Activated CD4-positive, alpha-beta T cell treated with anti-CD3 and anti-CD28 coated beads, Interleukin-2, amount 10 ng/mL, durations not matched to agents 24 days and 14 days (primary cell): ENCODE measurements at regions of chr2 and their contacts with region 1.

Region 1: DNA sequence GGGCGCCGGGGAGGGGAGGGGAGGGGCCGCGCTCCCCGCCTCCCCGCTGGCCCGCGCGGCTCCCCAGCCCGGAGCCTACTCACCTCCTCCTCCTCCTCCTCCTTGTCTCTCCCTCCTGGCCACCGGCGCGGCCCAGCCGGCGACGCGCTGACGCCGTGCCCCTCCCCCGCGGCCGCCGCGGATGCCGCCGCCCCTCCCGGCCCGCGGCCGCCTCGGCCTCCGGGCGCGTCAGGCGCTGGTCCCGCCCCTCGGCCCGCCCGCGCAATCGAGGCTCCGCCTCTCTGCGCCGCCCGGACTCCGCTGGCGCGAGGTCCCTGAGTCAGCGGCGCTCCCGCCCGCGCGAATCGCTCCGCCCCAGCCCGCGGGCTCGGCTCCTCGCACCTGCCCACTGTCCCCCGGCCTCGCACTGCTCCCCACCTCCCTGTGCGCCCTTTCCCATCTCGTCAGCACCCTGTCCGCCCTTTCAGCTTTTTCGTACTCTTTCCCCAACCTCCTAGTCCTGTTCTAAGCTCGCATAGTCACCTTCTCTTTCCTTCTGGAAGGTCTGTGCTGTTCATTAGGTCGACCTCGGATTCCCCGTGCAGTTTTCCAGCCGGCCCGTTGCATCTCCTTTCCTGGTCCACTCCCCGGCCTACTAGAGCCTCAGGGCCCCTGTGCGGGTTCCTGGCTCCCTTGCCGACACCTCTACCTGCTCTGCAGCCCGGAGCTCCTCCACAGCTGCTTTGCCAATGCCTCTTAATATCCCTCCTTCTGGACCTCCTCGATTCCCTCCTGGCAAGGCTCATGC is 187.4 kb downstream of the ZEB2 start:
- DNase-seq: peak; percentile 98
- H3K4me3 Mint-ChIP-seq: peak overlapping the region; percentile 95
- H3K27ac Mint-ChIP-seq: peak overlapping the region; percentile 90
- H3K4me1 Mint-ChIP-seq: peaks cover 44% of the 10 kb centered on the region
- H3K27me3 Mint-ChIP-seq: peaks cover 6% of the 10 kb centered on the region

Region 2: DNA sequence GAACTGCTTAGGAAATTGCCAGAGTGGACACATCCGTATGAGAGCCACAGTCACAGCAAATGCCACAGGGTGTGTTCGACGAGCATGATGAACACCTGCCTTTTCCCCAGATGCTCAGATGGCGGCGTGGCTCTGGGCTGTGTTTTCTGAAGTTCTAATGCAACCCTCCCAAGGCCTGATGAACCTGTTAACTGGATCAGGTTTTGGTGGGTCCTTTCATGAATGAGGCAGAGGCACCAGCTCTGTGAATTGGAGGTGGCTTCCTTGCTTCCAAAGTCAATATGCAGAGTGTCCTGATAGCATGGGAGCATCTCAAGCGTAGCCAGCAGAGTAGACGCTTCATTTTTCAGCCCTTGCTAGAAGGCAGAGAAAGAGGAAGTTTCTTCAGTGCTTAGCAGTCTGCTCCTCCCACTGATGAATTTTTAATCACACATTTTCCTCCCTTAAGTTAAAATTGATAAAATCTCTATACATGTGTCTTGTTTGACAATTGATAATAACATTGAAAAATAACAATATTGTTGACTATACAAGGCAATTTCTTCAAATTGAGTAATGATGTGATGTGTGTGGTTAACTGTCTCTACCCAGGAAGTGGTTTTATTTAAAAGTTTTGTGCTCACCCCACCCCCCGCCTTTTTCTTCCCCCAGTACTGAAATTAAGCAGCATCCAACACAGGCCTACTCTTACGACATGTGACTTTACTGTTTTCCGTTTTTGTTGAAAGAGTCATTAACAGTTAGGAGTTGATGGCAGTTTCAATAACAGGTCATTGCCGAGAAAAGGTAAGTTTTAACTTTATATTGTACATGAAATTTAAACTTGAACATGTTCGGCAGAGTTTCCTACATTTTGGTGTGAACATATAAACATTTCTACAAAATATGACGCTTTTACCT is 1203.6 kb before region 1 on chr2 and contains the start of gene ARHGAP15:
- intact Hi-C with region 1: loop called (anchors 5 kb)
- DNase-seq: peak; percentile 90
- H3K4me3 Mint-ChIP-seq: peak within 1 kb of the TSS; percentile 80
- H3K27ac Mint-ChIP-seq: peak within 1 kb of the TSS; percentile 99
- H3K4me1 Mint-ChIP-seq: peaks cover 37% of the 10 kb centered on the region
- H3K27me3 Mint-ChIP-seq: no peaks in the 10 kb centered on the region
- total RNA-seq, gene ARHGAP15: 56.0 and 56.2 TPM in 2 replicates

Region 3: GRCh38 chr2:144267239-144267638 is 65.3 kb before region 1 on chr2:
- intact Hi-C with region 1: loop called (anchors 2 kb)
- DNase-seq: no peak
- H3K4me3 Mint-ChIP-seq: peak overlapping the region; percentile 35
- H3K27ac Mint-ChIP-seq: peak overlapping the region; percentile 76
- H3K4me1 Mint-ChIP-seq: peaks cover 20% of the 10 kb centered on the region
- H3K27me3 Mint-ChIP-seq: no peaks in the 10 kb centered on the region

Region 4: GRCh38 chr2:144350151-144350802 is 17.7 kb after region 1 on chr2:
- intact Hi-C with region 1: loop called (anchors 2 kb)
- DNase-seq: no peak
- H3K4me3 Mint-ChIP-seq: peak overlapping the region; percentile 28
- H3K27ac Mint-ChIP-seq: peak overlapping the region; percentile 84
- H3K4me1 Mint-ChIP-seq: peaks cover 20% of the 10 kb centered on the region
- H3K27me3 Mint-ChIP-seq: peaks cover 1% of the 10 kb centered on the region

Region 5: DNA sequence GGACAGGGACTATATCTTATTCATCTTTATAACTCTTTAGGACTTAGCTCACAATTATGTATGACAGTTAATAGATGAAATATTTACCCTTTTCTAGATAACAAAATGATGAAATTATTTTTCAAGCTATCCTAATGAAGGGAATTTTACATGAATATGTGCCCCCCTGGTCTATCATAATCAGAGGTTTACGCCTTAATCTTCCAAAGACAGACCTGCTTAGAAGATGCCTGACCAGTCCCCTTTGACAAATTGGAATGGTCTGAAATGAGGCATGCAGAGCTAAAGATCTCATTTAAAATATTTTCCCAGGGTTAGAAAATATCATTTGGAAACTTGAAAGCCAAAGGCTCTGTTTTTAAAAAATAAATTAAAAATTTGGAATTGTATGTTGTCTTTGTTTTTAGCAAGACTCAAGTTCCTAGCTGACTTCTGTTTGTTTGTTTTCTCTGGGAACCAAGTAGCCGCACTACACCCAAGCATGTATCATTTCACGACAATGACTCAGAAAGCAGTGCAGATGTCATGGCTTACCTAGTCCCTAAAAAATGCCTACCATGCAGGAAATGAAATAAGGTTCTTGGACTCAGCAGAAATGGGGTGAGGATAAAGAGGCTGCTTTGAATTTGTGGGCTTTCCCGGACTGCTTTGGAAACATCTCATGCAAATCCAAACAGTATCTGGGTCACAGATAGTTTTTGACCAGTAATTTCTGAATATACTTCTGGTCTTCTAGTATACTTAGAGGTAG is 25.2 kb after region 1 on chr2:
- intact Hi-C with region 1: loop called (anchors 1 kb)
- DNase-seq: peak; percentile 66
- H3K4me3 Mint-ChIP-seq: peak overlapping the region; percentile 9
- H3K27ac Mint-ChIP-seq: peak overlapping the region; percentile 68
- H3K4me1 Mint-ChIP-seq: peaks cover 16% of the 10 kb centered on the region
- H3K27me3 Mint-ChIP-seq: no peaks in the 10 kb centered on the region

Region 6: DNA sequence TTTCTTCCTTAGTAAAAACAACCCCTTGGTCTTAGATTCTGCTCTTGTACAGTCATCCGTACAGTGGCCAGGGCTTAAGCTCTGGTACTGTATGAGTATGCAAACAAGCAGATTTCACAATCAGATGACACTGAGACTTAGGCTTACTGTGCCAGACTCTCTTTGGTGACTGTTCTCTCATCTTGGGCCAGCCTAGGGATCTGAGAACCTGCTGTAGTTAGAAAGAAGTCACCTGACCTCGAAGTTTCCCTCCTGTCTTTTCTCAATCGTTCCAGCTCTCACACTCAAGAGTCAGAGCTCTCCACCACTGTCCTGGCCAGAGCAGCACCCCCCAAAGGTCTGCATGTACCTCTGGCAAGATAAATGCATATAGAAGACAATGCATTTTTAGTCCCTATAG is 124.1 kb after region 1 on chr2:
- intact Hi-C with region 1: loop called (anchors 5 kb)
- DNase-seq: no peak
- H3K4me3 Mint-ChIP-seq: no peak overlapping the region
- H3K27ac Mint-ChIP-seq: no peak overlapping the region
- H3K4me1 Mint-ChIP-seq: peaks cover 38% of the 10 kb centered on the region
- H3K27me3 Mint-ChIP-seq: peaks cover 7% of the 10 kb centered on the region